Activated naive CD4-positive, alpha-beta T cell treated with anti-CD3 and anti-CD28 coated beads for 36 hours (primary cell): ENCODE measurements at regions of chr6 and their contacts with region 1.

Region 1: DNA sequence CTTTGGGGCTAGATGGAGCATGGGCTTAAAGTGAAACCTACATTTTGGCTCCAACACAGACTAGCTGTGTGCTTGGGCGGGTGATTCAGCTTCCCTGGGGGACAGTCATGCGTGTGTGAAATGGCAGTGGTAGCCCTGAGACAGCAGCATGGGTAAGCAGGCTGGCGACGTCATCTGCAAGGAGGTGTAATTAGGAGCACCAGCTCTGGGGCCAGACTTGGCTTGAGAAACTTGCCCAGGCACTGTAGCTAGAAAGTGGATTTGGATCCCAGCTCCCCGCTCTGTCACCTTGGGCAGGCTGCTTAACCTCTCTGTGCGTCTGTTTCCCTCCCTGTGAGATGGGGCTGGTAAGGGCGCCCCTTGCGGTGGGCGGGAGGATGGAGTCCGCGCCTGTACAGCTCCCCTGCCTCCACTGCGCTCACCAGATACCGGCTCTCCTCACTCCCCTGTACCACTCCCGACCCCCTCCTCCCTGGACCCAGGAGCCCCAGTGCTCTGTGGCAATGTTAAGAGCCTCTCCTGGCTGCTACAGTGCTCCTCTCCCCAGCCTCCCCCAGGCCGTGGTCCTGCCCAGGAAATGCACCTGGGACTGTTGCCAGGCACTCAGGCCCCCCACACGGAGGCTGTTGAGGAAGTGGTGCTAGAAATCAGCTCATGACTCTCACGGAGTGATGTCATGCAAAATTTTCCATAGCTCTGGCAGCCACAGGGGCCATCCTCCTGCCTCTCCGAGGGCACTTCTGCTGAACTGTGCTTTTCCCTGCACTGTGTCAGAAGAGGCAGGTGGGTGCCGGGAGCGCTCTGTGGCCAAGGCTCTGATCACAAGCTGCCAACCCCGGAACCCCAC is 44.6 kb downstream of the SYNJ2 start:
- DNase-seq: peak; percentile 91
- H3K4me3 Mint-ChIP-seq: peak overlapping the region; percentile 81
- H3K27ac Mint-ChIP-seq: peak overlapping the region; percentile 99
- H3K4me1 Mint-ChIP-seq: peaks cover 36% of the 10 kb centered on the region
- H3K27me3 Mint-ChIP-seq: no peaks in the 10 kb centered on the region

Region 2: GRCh38 chr6:157679605-157680580 is 346.4 kb before region 1 on chr6:
- CTCF ChIA-PET with region 1: no interaction called
- intact Hi-C with region 1: no loop called
- DNase-seq: no peak
- H3K4me3 Mint-ChIP-seq: no peak overlapping the region
- H3K27ac Mint-ChIP-seq: no peak overlapping the region
- H3K4me1 Mint-ChIP-seq: no peaks in the 10 kb centered on the region
- H3K27me3 Mint-ChIP-seq: no peaks in the 10 kb centered on the region

Region 3: DNA sequence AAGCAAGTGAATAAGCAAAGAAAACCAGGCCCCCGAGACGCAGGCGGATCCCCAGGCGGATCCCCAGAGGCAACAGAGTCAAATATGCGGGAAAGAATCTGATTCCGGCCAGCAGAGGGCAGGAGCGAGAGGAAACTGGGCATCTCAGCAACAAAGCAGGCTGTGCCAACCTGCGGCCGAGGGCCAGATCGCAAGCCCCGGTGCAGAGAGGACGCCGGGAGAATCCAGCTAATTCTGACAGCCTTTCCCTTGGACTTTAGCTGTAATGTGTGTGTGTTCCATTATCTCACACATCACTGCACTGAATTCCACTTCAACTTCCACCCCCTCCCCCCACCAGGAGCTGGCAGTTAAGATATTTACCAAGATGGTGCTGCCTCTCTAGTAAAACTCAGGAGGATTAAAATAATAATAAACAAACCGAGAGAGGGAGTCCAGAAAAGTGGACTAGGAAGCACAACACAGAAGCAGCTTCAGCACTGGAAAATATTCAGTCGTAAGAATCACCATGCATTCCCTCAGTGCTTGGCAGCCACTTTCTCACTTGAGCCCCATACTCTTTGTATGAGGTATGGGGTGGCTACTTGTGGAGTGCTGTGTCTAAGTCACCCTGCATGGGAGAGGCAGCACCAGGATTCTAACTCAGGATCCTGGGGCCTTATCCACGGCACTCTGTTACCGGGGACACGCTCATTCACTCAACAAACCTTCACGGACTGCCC is 269.4 kb before region 1 on chr6:
- CTCF ChIA-PET with region 1: interaction called, 13 read pairs
- intact Hi-C with region 1: no loop called
- DNase-seq: peak; percentile 94
- H3K4me3 Mint-ChIP-seq: peak overlapping the region; percentile 28
- H3K27ac Mint-ChIP-seq: peak overlapping the region; percentile 89
- H3K4me1 Mint-ChIP-seq: peaks cover 93% of the 10 kb centered on the region
- H3K27me3 Mint-ChIP-seq: no peaks in the 10 kb centered on the region

Region 4: DNA sequence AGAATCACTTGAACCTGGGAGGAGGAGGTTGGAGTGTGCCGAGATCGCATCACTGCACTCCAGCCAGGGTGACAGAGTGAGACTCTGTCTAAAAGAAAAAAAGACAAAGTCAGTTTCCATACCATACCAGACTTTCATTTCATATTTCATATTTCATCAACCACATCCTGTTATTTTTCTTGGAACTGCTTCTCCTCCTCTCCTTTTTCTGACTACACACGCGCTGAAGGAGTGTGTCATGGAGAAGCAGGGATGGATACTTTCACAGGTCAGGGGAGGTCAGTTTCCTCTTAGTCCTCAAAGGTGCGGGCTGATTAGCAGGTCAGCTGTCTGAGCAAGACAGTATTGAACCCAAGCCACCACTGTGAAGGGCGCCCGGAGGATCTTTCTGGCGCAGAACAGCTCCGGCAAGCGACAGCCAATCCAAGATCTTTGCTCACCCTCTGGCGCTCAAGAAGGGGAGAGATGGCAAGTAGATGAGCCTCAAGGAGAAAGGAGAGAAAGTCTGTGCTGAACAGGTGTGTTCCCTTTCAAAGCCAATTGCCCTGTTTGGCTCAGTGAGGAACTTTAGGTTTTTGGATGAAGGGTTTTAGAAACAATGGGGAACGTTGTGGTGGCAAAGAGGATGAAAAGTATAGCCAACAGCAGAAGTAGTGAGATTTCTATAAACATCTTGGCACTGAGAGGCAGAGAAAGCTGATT is 63.5 kb before region 1 on chr6:
- CTCF ChIA-PET with region 1: interaction called, 6 read pairs
- intact Hi-C with region 1: loop called (anchors 1 kb)
- DNase-seq: peak; percentile 55
- H3K4me3 Mint-ChIP-seq: peak overlapping the region; percentile 65
- H3K27ac Mint-ChIP-seq: peak overlapping the region; percentile 89
- H3K4me1 Mint-ChIP-seq: peaks cover 21% of the 10 kb centered on the region
- H3K27me3 Mint-ChIP-seq: no peaks in the 10 kb centered on the region

Region 5: GRCh38 chr6:158002951-158003853 is 23.1 kb before region 1 on chr6:
- CTCF ChIA-PET with region 1: interaction called, 21 read pairs
- intact Hi-C with region 1: loop called (anchors 2 kb)
- DNase-seq: peak; percentile 62
- H3K4me3 Mint-ChIP-seq: no peak overlapping the region
- H3K27ac Mint-ChIP-seq: peak overlapping the region; percentile 76
- H3K4me1 Mint-ChIP-seq: peaks cover 65% of the 10 kb centered on the region
- H3K27me3 Mint-ChIP-seq: no peaks in the 10 kb centered on the region

Region 6: DNA sequence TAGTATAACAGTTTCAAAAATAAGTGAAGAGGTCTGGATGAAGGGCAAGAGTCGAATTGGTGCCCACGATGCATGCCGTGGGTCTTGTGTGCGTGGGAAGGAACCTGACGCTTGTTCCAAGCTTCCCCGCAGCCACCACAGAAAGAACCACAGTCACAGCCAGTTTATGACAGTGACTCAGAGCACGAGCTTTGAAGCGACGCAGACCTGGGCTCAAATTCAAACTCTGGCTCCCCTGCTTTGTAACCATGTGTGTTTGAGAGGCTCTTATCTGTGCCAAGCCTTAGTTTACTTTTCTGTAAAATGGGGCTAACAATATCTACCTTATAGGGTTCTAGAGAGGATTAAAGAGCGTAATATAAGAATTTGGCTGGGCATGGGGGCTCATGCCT is 20.8 kb after region 1 on chr6:
- CTCF ChIA-PET with region 1: interaction called, 25 read pairs
- intact Hi-C with region 1: loop called (anchors 1 kb)
- DNase-seq: peak; percentile 91
- H3K4me3 Mint-ChIP-seq: peak overlapping the region; percentile 2
- H3K27ac Mint-ChIP-seq: peak overlapping the region; percentile 73
- H3K4me1 Mint-ChIP-seq: peaks cover 25% of the 10 kb centered on the region
- H3K27me3 Mint-ChIP-seq: no peaks in the 10 kb centered on the region

Region 7: GRCh38 chr6:158168040-158168289 is 141.7 kb after region 1 on chr6 and contains the start of gene SERAC1:
- CTCF ChIA-PET with region 1: no interaction called
- intact Hi-C with region 1: loop called (anchors 1 kb)
- DNase-seq: no peak
- H3K4me3 Mint-ChIP-seq: peak within 1 kb of the TSS; percentile 91
- H3K27ac Mint-ChIP-seq: peak within 1 kb of the TSS; percentile 94
- H3K4me1 Mint-ChIP-seq: peaks cover 26% of the 10 kb centered on the region
- H3K27me3 Mint-ChIP-seq: no peaks in the 10 kb centered on the region
- total RNA-seq, gene SERAC1: 3.1 to 4.8 TPM